ENCODE measurements at regions of chr19 and their contacts with region 1.

Region 1: GRCh38 chr19:45405435-45406225 is 761 bp upstream of the PPP1R13L start:
- DNase-seq: peak in 1 of 2 experiments; percentile 93
- H3K4me3 ChIP-seq: peak overlapping the region; percentile 69 to 96 (median 91)
- H3K27ac ChIP-seq: peak overlapping the region; percentile 99
- H3K4me1 ChIP-seq: peaks cover 3 to 21% (median 11%) of the 10 kb centered on the region in 4 experiments; a peak in 5 of 7 replicates
- H3K27me3 ChIP-seq: peaks cover 0 to 5% (median 2%) of the 10 kb centered on the region in 4 experiments; a peak in 2 of 7 replicates
- CTCF ChIP-seq: no peak
- EP300 ChIP-seq: no peak
- POLR2A ChIP-seq: no peak
- RAD21 ChIP-seq: no peak

Region 2: GRCh38 chr19:45340232-45340898 is 65.3 kb before region 1 on chr19 and contains the start of gene KLC3:
- CTCF ChIA-PET with region 1: interaction called, 13 read pairs
- POLR2A ChIA-PET with region 1: no interaction called
- DNase-seq: peak in 1 of 2 experiments; percentile 90
- H3K4me3 ChIP-seq: peak within 1 kb of the TSS; percentile 28 to 70 (median 36)
- H3K27ac ChIP-seq: no peak within 1 kb of the TSS
- H3K4me1 ChIP-seq: peaks cover 0 to 3% (median 0%) of the 10 kb centered on the region in 4 experiments; a peak in 4 of 7 replicates
- H3K27me3 ChIP-seq: peaks cover 4 to 16% (median 13%) of the 10 kb centered on the region in 4 experiments; a peak in 6 of 7 replicates
- CTCF ChIP-seq: no peak
- EP300 ChIP-seq: no peak
- POLR2A ChIP-seq: no peak
- RAD21 ChIP-seq: no peak
- total RNA-seq, gene KLC3: 2.8 and 3.2 TPM in 2 replicates

Region 3: GRCh38 chr19:45370410-45371204 is 35.0 kb before region 1 on chr19 and contains the start of gene ERCC2:
- CTCF ChIA-PET with region 1: interaction called, 57 read pairs
- POLR2A ChIA-PET with region 1: interaction called, 5 read pairs
- DNase-seq: peak; percentile 93 to 100
- H3K4me3 ChIP-seq: peak within 1 kb of the TSS; percentile 82 to 97 (median 89)
- H3K27ac ChIP-seq: peak within 1 kb of the TSS; percentile 44; the same call in 1 of the 2 replicates
- H3K4me1 ChIP-seq: peaks cover 0 to 3% (median 0%) of the 10 kb centered on the region in 4 experiments; a peak in 4 of 7 replicates
- H3K27me3 ChIP-seq: no peaks in the 10 kb centered on the region
- CTCF ChIP-seq: no peak
- EP300 ChIP-seq: no peak
- POLR2A ChIP-seq: no peak; a peak in 2 of 3 replicates
- RAD21 ChIP-seq: no peak
- total RNA-seq, gene ERCC2: 93.4 and 107 TPM in 2 replicates

Region 4: DNA sequence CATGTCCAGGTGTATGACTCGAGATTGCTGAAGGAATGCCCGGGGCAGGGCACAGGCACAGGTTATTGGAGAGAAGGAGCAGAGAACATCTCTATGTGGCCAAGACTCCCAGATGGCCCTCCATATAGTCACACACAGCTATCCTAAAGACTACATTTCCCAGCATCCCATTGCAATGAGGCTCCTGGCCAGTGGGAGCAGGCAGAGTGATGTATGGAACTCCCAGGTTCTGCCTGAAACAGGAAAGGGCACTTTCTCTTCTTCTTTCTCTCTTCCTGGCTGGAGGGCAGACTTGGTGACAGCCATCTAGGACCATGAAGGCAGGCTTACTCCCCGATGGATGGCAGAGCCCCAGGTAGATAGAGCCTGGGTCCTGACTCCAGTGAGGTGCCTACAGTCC is 14.3 kb before region 1 on chr19:
- CTCF ChIA-PET with region 1: interaction called, 22 read pairs
- POLR2A ChIA-PET with region 1: interaction called, 17 read pairs
- DNase-seq: no peak
- H3K4me3 ChIP-seq: no peak overlapping the region
- H3K27ac ChIP-seq: peak overlapping the region; percentile 23; the same call in 1 of the 2 replicates
- H3K4me1 ChIP-seq: peaks cover 0 to 5% (median 2%) of the 10 kb centered on the region in 4 experiments; a peak in 4 of 7 replicates
- H3K27me3 ChIP-seq: peaks cover 2 to 11% (median 5%) of the 10 kb centered on the region in 4 experiments; a peak in 6 of 7 replicates
- CTCF ChIP-seq: no peak
- EP300 ChIP-seq: no peak
- POLR2A ChIP-seq: no peak
- RAD21 ChIP-seq: no peak

Region 5: GRCh38 chr19:45423589-45424190 is 18.1 kb after region 1 on chr19 and contains the start of gene ERCC1:
- CTCF ChIA-PET with region 1: interaction called, 4 read pairs
- POLR2A ChIA-PET with region 1: interaction called, 19 read pairs
- DNase-seq: peak; percentile 98 to 99
- H3K4me3 ChIP-seq: peak within 1 kb of the TSS; percentile 52 to 67 (median 64)
- H3K27ac ChIP-seq: peak within 1 kb of the TSS; percentile 76
- H3K4me1 ChIP-seq: peaks cover 0 to 11% (median 6%) of the 10 kb centered on the region in 4 experiments; a peak in 6 of 7 replicates
- H3K27me3 ChIP-seq: no peaks in the 10 kb centered on the region
- CTCF ChIP-seq: no peak
- EP300 ChIP-seq: no peak; a peak in 1 of 3 replicates
- POLR2A ChIP-seq: peak; percentile 62 to 67; a peak in 2 of 3 replicates
- RAD21 ChIP-seq: no peak
- total RNA-seq, gene ERCC1: 44.7 and 46.4 TPM in 2 replicates

Region 6: GRCh38 chr19:45478454-45479238 is 73.0 kb after region 1 on chr19:
- CTCF ChIA-PET with region 1: interaction called, 41 read pairs
- POLR2A ChIA-PET with region 1: interaction called, 7 read pairs
- DNase-seq: peak in 1 of 2 experiments; percentile 94
- H3K4me3 ChIP-seq: peak overlapping the region; percentile 44 to 82 (median 75); a peak in 7 of 8 replicates
- H3K27ac ChIP-seq: peak overlapping the region; percentile 97
- H3K4me1 ChIP-seq: peaks cover 2 to 5% (median 3%) of the 10 kb centered on the region in 4 experiments
- H3K27me3 ChIP-seq: no peaks in the 10 kb centered on the region; a peak in 2 of 7 replicates
- CTCF ChIP-seq: peak; percentile 87 to 93 (median 91)
- EP300 ChIP-seq: no peak
- POLR2A ChIP-seq: peak in 1 of 2 experiments; percentile 71; a peak in 2 of 3 replicates
- RAD21 ChIP-seq: peak; percentile 90

Region 7: GRCh38 chr19:45485305-45486077 is 79.9 kb after region 1 on chr19:
- CTCF ChIA-PET with region 1: interaction called, 13 read pairs
- POLR2A ChIA-PET with region 1: interaction called, 4 read pairs
- DNase-seq: peak in 1 of 2 experiments; percentile 100
- H3K4me3 ChIP-seq: peak overlapping the region; percentile 32 to 69 (median 52)
- H3K27ac ChIP-seq: no peak overlapping the region; the same call in 1 of the 2 replicates
- H3K4me1 ChIP-seq: peaks cover 0 to 3% (median 0%) of the 10 kb centered on the region in 4 experiments; a peak in 1 of 7 replicates
- H3K27me3 ChIP-seq: no peaks in the 10 kb centered on the region
- CTCF ChIP-seq: peak; percentile 86 to 95 (median 92)
- EP300 ChIP-seq: no peak
- POLR2A ChIP-seq: no peak
- RAD21 ChIP-seq: peak; percentile 59 to 66

Measured in H1 (cell line).